Adrenal gland (tissue), 19 donors: ENCODE measurements at regions of chr9 and their contacts with region 1.

Region 1: DNA sequence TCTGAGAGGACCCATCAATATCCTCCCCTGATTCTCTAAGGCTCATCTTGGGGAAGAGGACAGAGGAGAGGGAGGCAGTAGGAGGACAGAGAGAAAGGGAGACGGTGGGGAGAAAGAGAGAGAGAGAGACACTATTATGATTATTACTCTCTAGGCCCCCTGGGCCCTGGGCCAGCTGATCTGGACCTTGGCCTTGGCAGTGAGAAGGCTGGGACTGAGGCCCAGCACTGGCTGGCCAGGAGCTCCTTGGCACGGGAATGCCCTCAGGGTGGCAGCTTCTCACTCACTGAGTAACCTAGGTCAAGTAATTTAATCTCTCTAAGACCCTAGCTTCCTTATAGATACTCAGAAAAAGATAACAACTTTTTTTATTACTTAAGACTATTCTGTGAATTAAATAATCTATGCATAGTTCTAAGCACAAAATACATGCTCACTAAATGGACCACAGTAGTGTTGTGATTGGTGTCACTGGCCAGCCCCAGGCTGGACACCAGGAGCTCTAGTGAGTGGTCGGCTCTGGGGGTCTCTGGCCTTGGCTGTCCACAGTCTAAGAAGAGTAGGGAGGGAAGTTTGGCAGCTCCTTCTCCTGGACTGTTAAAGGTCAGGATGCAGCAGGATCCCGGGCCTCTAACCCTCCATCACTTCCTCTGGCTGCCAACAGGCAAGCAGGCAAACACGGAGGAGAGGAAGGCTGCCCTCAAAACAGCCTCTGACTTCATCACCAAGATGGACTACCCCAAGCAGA is 50.0 kb downstream of the GSN start:
- DNase-seq: peak; percentile 56 to 86 (median 75)
- H3K4me3 ChIP-seq: no peak overlapping the region
- H3K27ac ChIP-seq: peak overlapping the region in 2 of 5 donors; percentile 27 to 59
- H3K4me1 ChIP-seq: peaks cover 0 to 7% of the 10 kb centered on the region in 2 donors
- H3K27me3 ChIP-seq: no peaks in the 10 kb centered on the region
- CTCF ChIP-seq: no peak
- POLR2A ChIP-seq: no peak

Region 2: GRCh38 chr9:121383715-121384114 is 65.8 kb after region 1 on chr9:
- intact Hi-C with region 1: loop called in 1 of 2 experiments (anchors 5 kb)
- DNase-seq: no peak
- H3K4me3 ChIP-seq: no peak overlapping the region
- H3K27ac ChIP-seq: no peak overlapping the region
- H3K4me1 ChIP-seq: no peaks in the 10 kb centered on the region
- H3K27me3 ChIP-seq: no peaks in the 10 kb centered on the region
- CTCF ChIP-seq: no peak
- POLR2A ChIP-seq: no peak

Region 3: GRCh38 chr9:121399883-121400607 is 82.1 kb after region 1 on chr9:
- intact Hi-C with region 1: loop called in 1 of 2 experiments (anchors 1 kb)
- DNase-seq: no peak
- H3K4me3 ChIP-seq: no peak overlapping the region
- H3K27ac ChIP-seq: no peak overlapping the region
- H3K4me1 ChIP-seq: no peaks in the 10 kb centered on the region
- H3K27me3 ChIP-seq: no peaks in the 10 kb centered on the region
- CTCF ChIP-seq: peak; percentile 64 to 87 (median 80)
- POLR2A ChIP-seq: no peak